ENCODE measurements at regions of chr1 and their contacts with region 1.

Region 1: DNA sequence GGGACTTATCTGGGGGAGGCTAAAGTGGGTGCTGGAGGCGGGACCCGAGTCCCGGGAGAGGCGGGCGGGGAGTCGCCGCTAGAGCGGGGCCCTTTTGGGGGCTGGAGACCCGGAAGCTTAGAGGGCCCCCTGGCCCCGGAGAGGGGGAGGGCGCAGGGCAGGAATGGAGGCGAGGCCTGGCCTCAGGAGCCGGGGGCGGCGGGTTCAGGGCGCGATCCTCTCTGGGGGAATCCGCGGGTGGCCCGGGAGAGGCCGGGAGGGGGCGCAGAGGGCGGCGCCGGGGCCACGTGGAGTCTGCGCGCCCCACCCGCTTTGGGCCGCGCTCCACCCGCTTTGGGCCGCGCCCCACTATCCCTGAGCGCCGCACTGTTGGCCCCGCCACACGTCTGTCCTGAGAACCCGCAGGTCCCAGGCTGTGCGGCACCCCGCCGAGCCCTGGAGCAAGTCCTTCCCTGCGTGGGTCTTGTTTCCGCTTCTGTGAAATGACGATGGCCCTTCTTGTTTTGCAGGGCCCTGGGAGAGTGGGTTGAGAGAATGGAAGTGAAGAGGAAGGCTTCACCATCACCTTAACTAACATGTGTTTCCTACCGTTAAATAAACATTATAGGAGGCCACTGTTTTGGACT is 84.4 kb downstream of the NKAIN1 start:
- DNase-seq: peak; percentile 52 to 78 (median 66)
- ATAC-seq: peak; percentile 76 to 94 (median 92)
- H3K4me3 ChIP-seq: peak overlapping the region; percentile 33 to 78 (median 67)
- H3K27ac ChIP-seq: peak overlapping the region in 11 of 12 donors; percentile 52 to 83 (median 66)
- H3K4me1 ChIP-seq: peaks cover 0 to 11% (median 6%) of the 10 kb centered on the region in 12 donors
- H3K27me3 ChIP-seq: no peaks in the 10 kb centered on the region
- CTCF ChIP-seq: peak in 8 of 12 donors; percentile 24 to 55 (median 40)
- POLR2A ChIP-seq: no peak

Region 2: DNA sequence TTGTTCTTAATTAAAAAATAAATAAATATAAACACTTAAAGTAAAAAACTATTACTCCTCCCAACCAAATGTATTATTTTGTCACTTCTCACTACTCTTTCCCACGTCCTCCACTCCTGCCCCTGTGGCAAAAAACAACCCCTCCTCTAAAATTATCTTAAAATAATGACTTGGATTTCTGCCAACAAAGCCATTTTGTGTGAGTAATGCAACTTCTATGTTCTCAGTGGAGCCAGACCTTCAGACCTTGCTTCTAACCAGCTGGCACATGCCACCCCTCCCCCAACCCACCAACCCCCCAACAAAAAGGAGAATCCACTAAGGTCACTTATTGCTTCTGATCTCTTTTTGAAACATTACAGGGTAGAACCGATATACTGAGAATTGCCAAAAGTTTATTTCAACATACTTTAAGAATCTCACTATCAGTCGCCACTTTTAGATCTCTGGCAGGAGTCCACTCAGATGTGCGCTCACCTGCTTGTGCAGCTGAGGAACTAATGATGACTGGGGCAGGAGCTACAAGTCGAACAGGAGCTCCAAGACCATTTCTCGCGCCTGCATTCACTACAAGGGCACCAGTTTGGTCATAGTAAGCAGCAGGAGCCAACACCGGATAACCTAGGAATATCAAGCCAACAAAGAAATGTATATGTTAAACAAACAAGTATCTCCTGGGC is 188.5 kb before region 1 on chr1:
- intact Hi-C with region 1: loop called in 1 of 10 experiments (anchors 10 kb)
- DNase-seq: peak in 1 of 5 donors; percentile 22
- ATAC-seq: peak in 2 of 4 donors; percentile 20 to 35
- H3K4me3 ChIP-seq: no peak overlapping the region
- H3K27ac ChIP-seq: peak overlapping the region in 11 of 12 donors; percentile 14 to 86 (median 63)
- H3K4me1 ChIP-seq: peaks cover 9 to 74% (median 38%) of the 10 kb centered on the region in 12 donors
- H3K27me3 ChIP-seq: no peaks in the 10 kb centered on the region
- CTCF ChIP-seq: no peak
- POLR2A ChIP-seq: no peak

Region 3: GRCh38 chr1:30982937-30983336 is 172.4 kb before region 1 on chr1:
- intact Hi-C with region 1: loop called in 1 of 10 experiments (anchors 10 kb)
- DNase-seq: no peak
- ATAC-seq: peak in 3 of 4 donors; percentile 30 to 40 (median 33)
- H3K4me3 ChIP-seq: no peak overlapping the region
- H3K27ac ChIP-seq: peak overlapping the region in 4 of 12 donors; percentile 0 to 85 (median 30)
- H3K4me1 ChIP-seq: peaks cover 0 to 69% (median 36%) of the 10 kb centered on the region in 12 donors
- H3K27me3 ChIP-seq: no peaks in the 10 kb centered on the region
- CTCF ChIP-seq: peak in 3 of 12 donors; percentile 18 to 29 (median 24)
- POLR2A ChIP-seq: no peak

Region 4: DNA sequence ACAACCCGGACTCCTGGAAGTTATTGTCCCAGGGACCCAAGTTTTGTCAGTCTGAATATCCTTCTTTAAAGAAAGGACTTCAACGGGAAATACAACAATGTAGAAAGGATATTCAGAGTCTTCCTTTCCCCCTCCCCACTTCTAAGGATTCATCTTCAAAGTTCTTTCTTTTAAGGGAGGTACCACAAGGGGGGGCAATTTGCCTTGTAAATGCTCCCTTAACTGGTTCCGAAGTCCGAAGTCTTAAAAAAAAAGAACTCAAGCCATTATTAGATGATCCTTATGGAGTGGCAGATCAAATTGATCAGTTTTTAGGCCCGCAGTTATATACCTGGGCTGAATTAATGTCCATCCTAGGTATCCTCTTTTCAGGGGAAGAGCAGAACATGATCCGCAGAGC is 304.7 kb after region 1 on chr1:
- intact Hi-C with region 1: no loop called
- DNase-seq: no peak
- ATAC-seq: no peak
- H3K4me3 ChIP-seq: no peak overlapping the region
- H3K27ac ChIP-seq: no peak overlapping the region
- H3K4me1 ChIP-seq: no peaks in the 10 kb centered on the region
- H3K27me3 ChIP-seq: peaks cover 0 to 6% (median 0%) of the 10 kb centered on the region in 9 donors
- CTCF ChIP-seq: peak in 4 of 12 donors; percentile 8 to 31 (median 26)
- POLR2A ChIP-seq: no peak